Esophagus muscularis mucosa (tissue), 4 donors: ENCODE measurements at regions of chr15 and their contacts with region 1.

Region 1: GRCh38 chr15:37098468-37099318 is 1.7 kb downstream of the MEIS2 start:
- DNase-seq: no peak
- H3K4me3 ChIP-seq: peak overlapping the region; percentile 65 to 88 (median 80)
- H3K27ac ChIP-seq: peak overlapping the region; percentile 86 to 98 (median 92)
- H3K4me1 ChIP-seq: peaks cover 4 to 23% (median 10%) of the 10 kb centered on the region in 4 donors
- H3K27me3 ChIP-seq: no peaks in the 10 kb centered on the region
- CTCF ChIP-seq: no peak
- EP300 ChIP-seq: no peak
- POLR2A ChIP-seq: no peak

Region 2: GRCh38 chr15:37015035-37015434 is 83.7 kb before region 1 on chr15:
- intact Hi-C with region 1: loop called (anchors 5 kb)
- DNase-seq: no peak
- H3K4me3 ChIP-seq: peak overlapping the region in 1 of 4 donors; percentile 29
- H3K27ac ChIP-seq: peak overlapping the region; percentile 70 to 82 (median 75)
- H3K4me1 ChIP-seq: peaks cover 51 to 61% (median 54%) of the 10 kb centered on the region in 4 donors
- H3K27me3 ChIP-seq: no peaks in the 10 kb centered on the region
- CTCF ChIP-seq: no peak
- EP300 ChIP-seq: no peak
- POLR2A ChIP-seq: no peak

Region 3: GRCh38 chr15:37691911-37692310 is 593.2 kb after region 1 on chr15:
- intact Hi-C with region 1: no loop called
- DNase-seq: no peak
- H3K4me3 ChIP-seq: no peak overlapping the region
- H3K27ac ChIP-seq: no peak overlapping the region
- H3K4me1 ChIP-seq: no peaks in the 10 kb centered on the region
- H3K27me3 ChIP-seq: no peaks in the 10 kb centered on the region
- CTCF ChIP-seq: no peak
- EP300 ChIP-seq: no peak
- POLR2A ChIP-seq: no peak